ENCODE measurements at regions of chr2 and their contacts with region 1.

Region 1: DNA sequence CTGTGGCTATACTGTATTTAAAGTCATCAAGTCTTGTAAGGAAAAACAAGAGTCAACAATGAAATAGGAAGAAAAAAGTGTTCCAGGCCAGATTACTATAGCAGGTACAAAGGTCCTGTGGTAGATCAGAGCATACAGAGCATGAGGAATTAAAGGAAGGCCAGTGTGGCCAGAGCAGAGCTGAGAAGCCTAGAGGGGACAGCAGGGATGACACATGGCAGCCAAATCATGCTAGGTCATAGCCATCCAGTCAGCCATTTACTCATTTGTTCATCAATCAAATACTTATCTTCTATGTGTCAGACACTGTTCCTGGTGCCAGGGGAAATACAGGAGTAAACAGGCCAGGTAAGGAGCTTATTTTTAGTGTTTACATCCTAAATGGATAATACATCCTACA is 24.3 kb downstream of the ADD2 start:
- DNase-seq: no peak
- ATAC-seq: no peak
- H3K4me3 ChIP-seq: no peak overlapping the region
- H3K27ac ChIP-seq: no peak overlapping the region
- H3K4me1 ChIP-seq: no peaks in the 10 kb centered on the region
- H3K27me3 ChIP-seq: peaks cover 6% of the 10 kb centered on the region
- CTCF ChIP-seq: no peak

Region 2: DNA sequence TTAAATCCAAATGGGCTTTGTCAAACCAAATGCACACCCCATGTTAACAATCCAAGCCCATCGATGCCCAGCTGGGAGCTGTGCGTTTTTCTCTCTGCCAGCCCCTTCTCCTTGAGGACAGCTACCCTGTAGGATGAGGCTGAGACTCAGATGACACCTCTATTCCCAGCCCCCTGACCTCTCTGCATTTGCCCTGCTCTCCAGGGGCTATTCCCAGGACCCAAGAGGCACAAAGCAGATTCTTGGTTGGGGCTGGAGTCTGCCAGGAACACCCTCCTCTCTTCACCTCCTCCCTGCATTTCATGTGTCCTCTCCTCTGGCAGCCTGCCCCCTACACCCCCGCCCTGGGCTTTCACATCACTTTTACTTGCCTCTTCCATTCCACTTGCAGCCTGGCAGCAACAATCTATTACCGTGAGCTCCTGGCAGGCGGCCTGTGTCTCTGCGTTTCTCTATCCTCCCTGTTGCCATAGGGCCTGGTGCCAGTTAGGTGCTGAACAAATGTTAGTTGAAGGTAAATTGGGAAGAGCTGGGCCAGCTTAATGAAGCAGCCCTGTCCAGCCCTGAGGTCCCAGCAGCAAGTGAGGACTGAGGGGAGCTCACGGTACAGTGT is 27.4 kb before region 1 on chr2:
- CTCF ChIA-PET with region 1: no interaction called
- POLR2A ChIA-PET with region 1: interaction called, 4 read pairs
- in situ Hi-C with region 1: no loop called
- intact Hi-C with region 1: loop called (anchors 1 kb)
- DNase-seq: no peak
- ATAC-seq: no peak
- H3K4me3 ChIP-seq: no peak overlapping the region
- H3K27ac ChIP-seq: no peak overlapping the region
- H3K4me1 ChIP-seq: no peaks in the 10 kb centered on the region
- H3K27me3 ChIP-seq: peaks cover 3% of the 10 kb centered on the region
- CTCF ChIP-seq: no peak

Region 3: DNA sequence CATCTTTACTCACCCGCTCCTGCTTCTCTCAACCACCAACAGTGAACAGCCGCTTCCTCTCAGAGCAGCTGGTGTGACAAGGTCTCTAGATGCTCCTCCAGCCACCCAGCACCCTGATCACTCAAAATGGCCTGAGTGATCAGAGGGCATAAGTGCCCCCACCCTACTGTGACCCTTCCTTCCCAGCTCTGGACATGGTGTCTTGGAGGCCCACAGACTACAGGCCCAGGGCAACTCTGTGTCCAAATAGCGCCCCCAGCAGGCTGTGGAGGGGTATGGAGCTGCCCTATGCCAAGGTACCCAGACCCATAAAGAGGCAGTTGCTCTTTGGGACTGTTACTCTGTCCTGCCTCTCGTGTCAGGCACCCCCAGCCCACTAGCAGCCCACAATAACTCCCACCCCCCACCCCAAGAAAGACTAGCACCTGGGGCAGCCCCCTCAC is 216.7 kb after region 1 on chr2:
- CTCF ChIA-PET with region 1: no interaction called
- POLR2A ChIA-PET with region 1: no interaction called
- in situ Hi-C with region 1: no loop called
- intact Hi-C with region 1: no loop called
- DNase-seq: no peak
- ATAC-seq: no peak
- H3K4me3 ChIP-seq: no peak overlapping the region
- H3K27ac ChIP-seq: no peak overlapping the region
- H3K4me1 ChIP-seq: no peaks in the 10 kb centered on the region
- H3K27me3 ChIP-seq: no peaks in the 10 kb centered on the region; the same call in 1 of the 2 replicates
- CTCF ChIP-seq: no peak

Region 4: DNA sequence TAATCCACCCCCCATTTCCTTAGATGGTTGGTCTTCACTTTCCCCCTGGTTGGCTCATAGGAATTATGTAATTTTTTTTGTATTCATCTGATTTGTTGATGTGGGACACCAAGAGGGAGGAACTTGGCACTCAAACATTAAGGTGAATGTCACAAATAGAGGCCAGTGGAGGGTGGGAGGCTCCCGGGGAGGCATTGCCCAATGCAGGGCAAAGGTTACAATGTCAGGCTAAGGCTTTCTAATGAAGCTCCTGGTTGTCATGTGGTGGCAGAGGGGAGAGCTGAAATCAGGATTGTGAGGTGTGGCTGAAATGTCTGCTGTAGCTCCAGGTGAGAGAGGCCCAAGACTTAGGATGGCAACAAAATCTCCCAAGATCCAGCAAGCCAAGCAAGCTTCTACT is 429.4 kb after region 1 on chr2:
- CTCF ChIA-PET with region 1: no interaction called
- POLR2A ChIA-PET with region 1: no interaction called
- in situ Hi-C with region 1: no loop called
- intact Hi-C with region 1: no loop called
- DNase-seq: no peak
- ATAC-seq: no peak
- H3K4me3 ChIP-seq: no peak overlapping the region
- H3K27ac ChIP-seq: no peak overlapping the region
- H3K4me1 ChIP-seq: no peaks in the 10 kb centered on the region
- H3K27me3 ChIP-seq: no peaks in the 10 kb centered on the region
- CTCF ChIP-seq: no peak

Measured in Panc1 (cell line).